ENCODE measurements at regions of chr1 and their contacts with region 1.

Region 1: DNA sequence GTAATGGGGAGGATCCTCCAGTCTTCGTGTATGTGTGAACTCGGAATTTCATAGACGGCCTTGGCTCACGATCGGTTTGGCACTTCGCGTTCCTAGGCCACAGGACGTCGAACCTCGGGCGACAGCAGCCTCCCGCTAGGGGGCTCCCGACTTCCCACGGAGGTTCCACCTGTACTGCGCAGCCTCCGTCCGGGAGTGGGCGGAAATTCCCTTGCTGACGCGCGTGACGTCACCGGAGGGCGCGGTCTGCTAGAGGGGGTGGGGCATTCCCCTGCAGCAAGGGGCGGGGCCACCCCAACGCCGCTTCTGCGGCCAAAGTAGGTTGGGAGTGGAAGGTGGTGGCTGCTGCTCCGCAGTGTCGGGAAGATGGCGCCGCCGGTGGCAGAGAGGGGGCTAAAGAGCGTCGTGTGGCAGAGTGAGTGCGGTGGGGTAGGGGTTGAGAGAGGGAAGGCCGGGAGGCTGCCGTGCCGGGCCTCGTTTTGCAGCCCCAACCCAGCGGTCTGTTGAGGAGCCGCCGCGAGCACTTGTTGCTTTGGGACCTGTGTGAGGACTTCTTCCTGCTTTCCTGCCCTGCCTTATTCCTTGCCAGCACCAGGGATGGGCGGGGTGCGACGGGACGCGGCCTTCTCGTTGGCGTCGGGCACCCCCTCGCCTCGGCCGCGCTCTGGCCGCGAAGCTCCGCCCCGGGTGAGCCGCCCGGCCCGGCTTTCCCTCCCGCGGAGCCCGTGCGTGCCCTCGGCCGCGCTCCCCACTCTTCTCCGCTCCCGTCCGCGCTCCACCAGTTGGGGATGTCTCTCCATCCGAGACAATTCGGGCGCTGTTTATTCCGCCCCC is at the start of gene STXBP3:
- DNase-seq: peak; percentile 98
- H3K4me3 Mint-ChIP-seq: peak within 1 kb of the TSS; percentile 99
- H3K27ac Mint-ChIP-seq: peak within 1 kb of the TSS; percentile 99
- H3K4me1 Mint-ChIP-seq: peaks cover 26% of the 10 kb centered on the region
- H3K27me3 Mint-ChIP-seq: no peaks in the 10 kb centered on the region
- total RNA-seq, gene STXBP3: 46.5 and 51.7 TPM in 2 replicates

Region 2: DNA sequence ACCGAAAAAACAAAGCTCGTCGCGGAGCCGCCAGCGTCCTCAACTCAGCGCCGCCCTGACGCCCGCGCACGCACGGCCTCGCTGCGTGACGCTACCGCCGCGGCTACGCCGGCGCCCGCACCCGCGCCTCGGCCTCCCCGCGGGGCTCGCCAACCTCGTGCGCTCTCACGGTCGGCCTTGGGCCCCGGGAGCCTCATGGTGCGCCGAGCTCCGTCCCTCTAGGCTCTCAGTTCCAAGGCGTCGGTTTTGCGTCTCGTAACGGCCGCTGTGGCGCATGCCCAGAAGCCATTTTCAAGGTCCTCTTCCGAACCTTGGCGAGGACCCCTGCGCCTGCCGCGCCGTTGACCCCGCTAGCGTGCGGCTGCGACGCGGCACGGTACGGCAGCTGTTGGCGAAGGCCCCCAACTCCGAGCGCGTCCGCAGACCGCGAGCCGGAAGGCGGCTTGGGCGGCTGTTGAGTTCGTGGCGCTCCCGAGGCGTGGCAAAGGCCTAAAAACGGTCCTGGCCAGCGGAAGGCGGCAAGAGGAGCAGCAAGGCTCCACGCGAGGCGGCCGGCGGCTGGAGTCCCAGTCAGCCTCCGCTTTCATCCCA is 85.5 kb before region 1 on chr1 and contains the start of gene HENMT1:
- intact Hi-C with region 1: loop called (anchors 1 kb)
- DNase-seq: peak; percentile 76
- H3K4me3 Mint-ChIP-seq: peak within 1 kb of the TSS; percentile 85
- H3K27ac Mint-ChIP-seq: peak within 1 kb of the TSS; percentile 95
- H3K4me1 Mint-ChIP-seq: peaks cover 40% of the 10 kb centered on the region
- H3K27me3 Mint-ChIP-seq: no peaks in the 10 kb centered on the region
- total RNA-seq, gene HENMT1: 16.5 and 17.7 TPM in 2 replicates

Region 3: GRCh38 chr1:108719656-108720435 is 26.7 kb before region 1 on chr1:
- intact Hi-C with region 1: no loop called
- DNase-seq: no peak
- H3K4me3 Mint-ChIP-seq: no peak overlapping the region
- H3K27ac Mint-ChIP-seq: no peak overlapping the region
- H3K4me1 Mint-ChIP-seq: peaks cover 4% of the 10 kb centered on the region
- H3K27me3 Mint-ChIP-seq: peaks cover 12% of the 10 kb centered on the region

Region 4: GRCh38 chr1:108758796-108759195 is 12.2 kb after region 1 on chr1:
- intact Hi-C with region 1: no loop called
- DNase-seq: no peak
- H3K4me3 Mint-ChIP-seq: no peak overlapping the region
- H3K27ac Mint-ChIP-seq: no peak overlapping the region
- H3K4me1 Mint-ChIP-seq: peaks cover 2% of the 10 kb centered on the region
- H3K27me3 Mint-ChIP-seq: no peaks in the 10 kb centered on the region

Region 5: DNA sequence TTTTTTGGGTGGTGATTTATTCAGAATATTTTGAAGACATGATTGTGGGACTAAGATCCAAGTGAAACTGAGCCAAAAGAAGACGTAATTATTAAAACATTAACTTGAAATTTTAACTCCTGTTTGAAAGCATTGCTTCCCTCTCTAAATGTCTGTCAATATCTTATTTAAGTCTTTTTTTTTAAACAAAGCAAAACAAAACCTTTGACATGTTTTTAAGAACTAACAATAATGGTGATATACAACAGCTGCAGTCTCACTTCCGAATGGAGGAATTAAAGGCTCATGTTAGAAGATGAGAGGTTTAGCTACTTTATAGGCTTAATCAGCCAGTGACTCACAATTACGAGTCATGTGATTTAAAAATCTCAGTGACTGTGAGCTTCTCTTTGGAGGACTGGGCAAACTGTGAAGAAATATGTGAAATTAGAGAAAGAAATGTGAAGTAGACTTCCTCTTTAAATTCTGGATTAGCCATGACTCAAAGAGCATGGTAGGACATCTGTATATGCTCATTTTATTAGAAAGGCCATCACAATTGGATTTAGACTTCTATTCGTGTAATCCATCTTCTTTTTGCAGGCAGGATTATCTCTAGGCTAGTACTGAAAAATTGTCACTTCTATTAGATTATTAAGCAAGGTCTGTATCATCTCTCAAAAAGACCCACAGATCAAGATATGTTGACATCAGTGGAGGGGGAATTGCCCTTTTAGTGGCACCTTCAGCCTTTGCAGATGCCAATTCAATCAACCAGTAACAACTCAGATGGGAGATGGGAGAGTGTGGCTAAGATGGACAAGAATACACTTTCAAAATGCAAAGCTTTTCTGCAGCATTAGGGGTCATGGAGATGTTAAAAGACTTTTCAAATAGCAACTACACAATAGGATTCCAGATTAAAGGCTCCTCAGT is 1899.5 kb after region 1 on chr1:
- intact Hi-C with region 1: loop called (anchors 5 kb)
- DNase-seq: no peak
- H3K4me3 Mint-ChIP-seq: peak overlapping the region; percentile 49
- H3K27ac Mint-ChIP-seq: peak overlapping the region; percentile 77
- H3K4me1 Mint-ChIP-seq: peaks cover 53% of the 10 kb centered on the region
- H3K27me3 Mint-ChIP-seq: no peaks in the 10 kb centered on the region

Measured in activated T-helper 2 cell treated with anti-CD3 and anti-CD28 coated beads, Interferon-gamma antibody, Interleukin-2, Interleukin-4, amounts not matched to agents 10 μg/mL and 5 μg/mL and 100 μg/mL, durations not matched to agents 14 hours and 24 hours and 36 hours (primary cell).